Activated B cell treated with CpG ODN at 0.5 μM for 24 hours (primary cell): ENCODE measurements at regions of chr11 and their contacts with region 1.

Region 1: DNA sequence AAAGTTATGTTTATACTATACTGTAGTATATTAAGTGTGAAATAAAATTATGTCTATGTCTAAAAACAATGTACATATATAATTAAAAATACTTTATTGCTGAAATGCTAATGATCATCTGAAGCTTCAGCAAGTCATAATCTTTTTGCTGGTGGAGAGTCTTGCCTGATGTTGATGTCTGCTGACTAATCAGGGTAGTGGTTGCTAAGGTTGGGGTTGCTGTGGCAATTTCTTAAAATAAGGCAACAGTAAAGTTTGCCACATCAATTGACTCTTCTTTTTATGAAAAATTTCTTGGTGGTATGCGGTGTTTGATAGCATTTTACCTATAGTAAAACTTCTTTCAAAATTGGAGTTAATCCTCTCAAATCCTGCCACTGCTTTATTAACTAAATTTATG is 21.4 kb downstream of the INSC start:
- DNase-seq: no peak
- ATAC-seq: no peak
- H3K4me3 Mint-ChIP-seq: no peak overlapping the region
- H3K27ac Mint-ChIP-seq: no peak overlapping the region
- H3K4me1 Mint-ChIP-seq: peaks cover 7% of the 10 kb centered on the region
- H3K27me3 Mint-ChIP-seq: peaks cover 12% of the 10 kb centered on the region
- CTCF ChIP-seq: no peak

Region 2: GRCh38 chr11:15091625-15092024 is 44.5 kb before region 1 on chr11:
- CTCF ChIA-PET with region 1: no interaction called
- POLR2A ChIA-PET with region 1: no interaction called
- intact Hi-C with region 1: no loop called
- DNase-seq: no peak
- ATAC-seq: peak; percentile 54
- H3K4me3 Mint-ChIP-seq: no peak overlapping the region
- H3K27ac Mint-ChIP-seq: no peak overlapping the region
- H3K4me1 Mint-ChIP-seq: peaks cover 12% of the 10 kb centered on the region
- H3K27me3 Mint-ChIP-seq: peaks cover 21% of the 10 kb centered on the region
- CTCF ChIP-seq: no peak

Region 3: GRCh38 chr11:15113381-15113780 is 22.8 kb before region 1 on chr11:
- CTCF ChIA-PET with region 1: no interaction called
- POLR2A ChIA-PET with region 1: no interaction called
- intact Hi-C with region 1: loop called (anchors 2 kb)
- DNase-seq: peak; percentile 54
- ATAC-seq: peak; percentile 94
- H3K4me3 Mint-ChIP-seq: peak overlapping the region; percentile 70
- H3K27ac Mint-ChIP-seq: peak overlapping the region; percentile 79
- H3K4me1 Mint-ChIP-seq: peaks cover 77% of the 10 kb centered on the region
- H3K27me3 Mint-ChIP-seq: peaks cover 13% of the 10 kb centered on the region
- CTCF ChIP-seq: no peak

Region 4: DNA sequence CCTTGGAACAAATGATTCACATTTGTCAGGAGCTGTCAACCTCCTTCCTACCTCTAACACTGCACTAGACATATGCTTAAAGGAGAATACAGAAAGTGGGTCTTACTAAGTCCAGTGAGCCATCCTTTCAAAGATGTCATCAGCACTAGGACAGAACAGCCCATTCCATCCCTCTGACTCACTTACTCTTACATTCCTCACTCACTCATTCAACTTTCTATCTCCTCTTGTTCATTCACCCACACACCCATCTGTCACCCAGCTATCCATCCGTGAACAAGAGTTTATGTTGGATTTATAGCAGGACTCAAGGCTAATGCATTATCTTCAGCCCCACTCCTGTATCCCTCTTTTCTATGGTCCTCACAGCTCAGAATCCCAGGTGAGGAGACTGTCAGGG is 12.3 kb before region 1 on chr11:
- CTCF ChIA-PET with region 1: no interaction called
- POLR2A ChIA-PET with region 1: no interaction called
- intact Hi-C with region 1: no loop called
- DNase-seq: no peak
- ATAC-seq: no peak
- H3K4me3 Mint-ChIP-seq: no peak overlapping the region
- H3K27ac Mint-ChIP-seq: no peak overlapping the region
- H3K4me1 Mint-ChIP-seq: peaks cover 4% of the 10 kb centered on the region
- H3K27me3 Mint-ChIP-seq: peaks cover 22% of the 10 kb centered on the region
- CTCF ChIP-seq: no peak